ENCODE measurements at regions of chr2 and their contacts with region 1.

Region 1: DNA sequence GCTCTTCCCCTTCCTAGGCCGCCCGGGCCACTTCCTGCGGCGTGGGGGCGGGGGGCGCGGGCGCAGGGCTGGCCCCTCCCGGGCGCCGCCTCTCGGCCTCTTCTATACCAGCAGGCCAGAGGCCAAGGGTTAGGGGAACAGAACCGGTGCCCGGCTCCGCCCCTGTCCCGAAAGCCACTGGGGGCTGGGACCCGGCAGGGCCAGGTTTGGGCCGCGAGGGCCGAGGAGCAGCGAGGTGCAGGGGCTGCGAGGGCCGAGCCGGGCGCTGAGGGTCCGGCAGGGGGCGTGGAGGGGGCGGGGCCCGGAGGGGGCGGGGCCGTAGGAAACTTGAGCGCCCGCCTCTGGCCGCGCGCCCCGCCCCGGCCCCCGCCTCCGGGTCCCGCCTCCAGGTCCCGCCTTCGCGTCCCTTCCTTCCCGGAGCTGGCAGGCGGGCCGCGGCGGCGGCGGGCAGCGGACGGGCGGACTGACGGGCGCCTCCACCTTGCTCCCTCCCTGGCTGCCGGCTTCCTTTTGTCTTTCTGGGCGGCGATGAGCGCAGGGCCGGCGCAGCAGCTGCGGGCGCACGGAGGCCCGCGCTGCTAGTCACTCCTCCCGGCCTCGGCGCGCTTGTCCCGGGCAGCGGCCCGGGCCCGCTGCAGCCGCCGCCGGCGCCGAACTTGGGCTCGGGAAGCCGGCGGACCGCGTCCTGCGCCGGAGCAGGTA is at the start of gene HPCAL1:
- DNase-seq: peak; percentile 94
- ATAC-seq: peak; percentile 91
- total RNA-seq, gene HPCAL1: 41.9 TPM

Region 2: DNA sequence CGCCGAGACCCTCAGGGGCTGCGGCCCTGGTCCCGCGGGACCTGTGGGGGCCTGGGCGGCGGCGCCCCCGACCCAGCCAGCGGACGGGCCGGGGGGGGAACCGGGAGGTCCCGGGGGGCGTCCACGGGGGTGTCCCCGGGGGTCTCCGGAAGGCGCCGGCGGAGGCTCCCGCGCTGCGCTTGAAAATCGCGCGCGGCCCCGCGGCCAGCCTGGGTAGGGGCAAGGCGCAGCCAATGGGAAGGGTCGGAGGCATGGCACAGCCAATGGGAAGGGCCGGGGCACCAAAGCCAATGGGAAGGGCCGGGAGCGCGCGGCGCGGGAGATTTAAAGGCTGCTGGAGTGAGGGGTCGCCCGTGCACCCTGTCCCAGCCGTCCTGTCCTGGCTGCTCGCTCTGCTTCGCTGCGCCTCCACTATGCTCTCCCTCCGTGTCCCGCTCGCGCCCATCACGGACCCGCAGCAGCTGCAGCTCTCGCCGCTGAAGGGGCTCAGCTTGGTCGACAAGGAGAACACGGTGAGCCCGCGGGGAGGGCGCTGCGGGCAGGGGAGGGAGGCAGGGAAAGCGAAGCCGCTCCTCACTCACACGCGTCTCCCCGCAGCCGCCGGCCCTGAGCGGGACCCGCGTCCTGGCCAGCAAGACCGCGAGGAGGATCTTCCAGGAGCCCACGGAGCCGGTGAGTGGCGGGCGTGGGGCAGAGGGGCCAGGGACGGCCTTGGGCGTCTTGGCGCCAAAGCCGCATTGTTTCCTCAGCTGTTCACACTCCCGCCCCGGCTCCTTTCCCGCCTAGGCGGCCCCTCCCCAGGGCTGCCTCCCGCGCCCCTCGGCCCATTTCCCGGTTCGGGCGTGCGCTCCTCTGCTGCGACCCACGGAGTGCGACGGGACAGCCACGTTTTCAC is 180.0 kb before region 1 on chr2 and contains the start of gene RRM2:
- intact Hi-C with region 1: loop called (anchors 10 kb)
- DNase-seq: peak; percentile 96
- ATAC-seq: peak; percentile 92
- total RNA-seq, gene RRM2: 4.2 TPM

Region 3: GRCh38 chr2:10239561-10239967 is 63.1 kb before region 1 on chr2:
- intact Hi-C with region 1: loop called (anchors 5 kb)
- DNase-seq: no peak
- ATAC-seq: no peak

Region 4: GRCh38 chr2:10254373-10255151 is 48.1 kb before region 1 on chr2:
- intact Hi-C with region 1: no loop called
- DNase-seq: no peak
- ATAC-seq: no peak